Transverse colon (tissue), 4 donors: ENCODE measurements at regions of chr1 and their contacts with region 1.

Region 1: GRCh38 chr1:93573940-93574469 is 107.6 kb downstream of the BCAR3 start:
- DNase-seq: no peak
- H3K4me3 ChIP-seq: no peak overlapping the region
- H3K27ac ChIP-seq: no peak overlapping the region
- H3K4me1 ChIP-seq: peaks cover 0 to 15% (median 10%) of the 10 kb centered on the region in 4 donors
- H3K27me3 ChIP-seq: no peaks in the 10 kb centered on the region
- CTCF ChIP-seq: no peak
- EP300 ChIP-seq: no peak
- POLR2A ChIP-seq: no peak

Region 2: GRCh38 chr1:93549811-93550210 is 24.2 kb before region 1 on chr1:
- in situ Hi-C with region 1: no loop called
- intact Hi-C with region 1: loop called (anchors 1 kb)
- DNase-seq: no peak
- H3K4me3 ChIP-seq: no peak overlapping the region
- H3K27ac ChIP-seq: no peak overlapping the region
- H3K4me1 ChIP-seq: peaks cover 10 to 32% (median 24%) of the 10 kb centered on the region in 4 donors
- H3K27me3 ChIP-seq: no peaks in the 10 kb centered on the region
- CTCF ChIP-seq: no peak
- EP300 ChIP-seq: no peak
- POLR2A ChIP-seq: no peak

Region 3: GRCh38 chr1:93784538-93784937 is 210.5 kb after region 1 on chr1:
- in situ Hi-C with region 1: no loop called
- intact Hi-C with region 1: no loop called
- DNase-seq: no peak
- H3K4me3 ChIP-seq: no peak overlapping the region
- H3K27ac ChIP-seq: no peak overlapping the region
- H3K4me1 ChIP-seq: no peaks in the 10 kb centered on the region
- H3K27me3 ChIP-seq: no peaks in the 10 kb centered on the region
- CTCF ChIP-seq: no peak
- EP300 ChIP-seq: no peak
- POLR2A ChIP-seq: no peak

Region 4: DNA sequence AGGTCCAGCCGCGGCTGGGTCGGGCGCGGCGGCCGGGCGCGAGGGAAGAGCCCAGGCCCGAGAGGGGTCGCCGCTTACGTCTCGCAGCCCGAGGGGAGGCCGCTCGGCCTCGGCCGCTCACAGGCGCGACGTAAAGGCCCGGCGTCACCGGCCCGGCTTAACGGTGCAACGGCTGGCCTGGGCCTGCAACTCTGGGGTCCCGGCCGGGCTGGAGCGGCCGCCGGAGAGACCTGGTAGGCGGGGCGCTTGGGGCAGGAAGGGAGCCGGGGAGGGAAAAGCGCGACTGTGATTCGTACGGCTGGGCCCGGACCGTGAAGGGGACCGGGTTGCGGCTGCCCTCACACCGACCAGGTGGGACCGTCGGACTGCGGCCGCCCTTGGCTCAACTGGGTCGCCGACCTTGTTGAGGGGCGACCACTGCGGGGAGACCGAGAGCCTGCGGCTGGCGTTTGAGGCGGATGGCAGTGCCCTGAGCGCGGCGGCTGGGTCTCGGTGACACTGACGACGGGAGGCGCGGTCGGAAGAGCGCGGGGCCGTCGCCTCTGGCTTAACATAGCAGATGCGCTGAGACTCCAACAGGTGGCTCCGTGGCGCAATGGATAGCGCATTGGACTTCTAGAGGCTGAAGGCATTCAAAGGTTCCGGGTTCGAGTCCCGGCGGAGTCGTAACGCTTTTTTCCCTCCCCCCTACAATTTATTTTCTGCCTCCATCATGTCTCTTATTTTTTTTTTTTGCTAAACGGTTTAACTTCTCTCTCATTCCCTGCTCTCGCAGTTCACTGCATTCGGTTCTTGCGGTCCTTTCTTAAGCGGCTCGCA is 273.2 kb after region 1 on chr1:
- in situ Hi-C with region 1: no loop called
- intact Hi-C with region 1: no loop called
- DNase-seq: peak; percentile 92
- H3K4me3 ChIP-seq: peak overlapping the region; percentile 54 to 89 (median 80)
- H3K27ac ChIP-seq: peak overlapping the region; percentile 94 to 100 (median 98)
- H3K4me1 ChIP-seq: peaks cover 11 to 30% (median 20%) of the 10 kb centered on the region in 4 donors
- H3K27me3 ChIP-seq: no peaks in the 10 kb centered on the region
- CTCF ChIP-seq: peak in 1 of 5 experiments; percentile 1
- EP300 ChIP-seq: no peak
- POLR2A ChIP-seq: peak; percentile 29